Activated T-helper 2 cell treated with anti-CD3 and anti-CD28 coated beads, Interferon-gamma antibody, Interleukin-2, Interleukin-4, amounts not matched to agents 10 μg/mL and 5 μg/mL and 100 μg/mL, durations not matched to agents 14 hours and 24 hours and 36 hours (primary cell): ENCODE measurements at regions of chr14 and their contacts with region 1.

Region 1: GRCh38 chr14:103546652-103547454 is 15.6 kb downstream of the BAG5 start:
- DNase-seq: peak; percentile 59
- H3K4me3 Mint-ChIP-seq: no peak overlapping the region
- H3K27ac Mint-ChIP-seq: no peak overlapping the region
- H3K4me1 Mint-ChIP-seq: no peaks in the 10 kb centered on the region
- H3K27me3 Mint-ChIP-seq: no peaks in the 10 kb centered on the region

Region 2: GRCh38 chr14:103436533-103436932 is 110.3 kb before region 1 on chr14:
- intact Hi-C with region 1: no loop called
- DNase-seq: no peak
- H3K4me3 Mint-ChIP-seq: no peak overlapping the region
- H3K27ac Mint-ChIP-seq: no peak overlapping the region
- H3K4me1 Mint-ChIP-seq: peaks cover 3% of the 10 kb centered on the region
- H3K27me3 Mint-ChIP-seq: no peaks in the 10 kb centered on the region

Region 3: DNA sequence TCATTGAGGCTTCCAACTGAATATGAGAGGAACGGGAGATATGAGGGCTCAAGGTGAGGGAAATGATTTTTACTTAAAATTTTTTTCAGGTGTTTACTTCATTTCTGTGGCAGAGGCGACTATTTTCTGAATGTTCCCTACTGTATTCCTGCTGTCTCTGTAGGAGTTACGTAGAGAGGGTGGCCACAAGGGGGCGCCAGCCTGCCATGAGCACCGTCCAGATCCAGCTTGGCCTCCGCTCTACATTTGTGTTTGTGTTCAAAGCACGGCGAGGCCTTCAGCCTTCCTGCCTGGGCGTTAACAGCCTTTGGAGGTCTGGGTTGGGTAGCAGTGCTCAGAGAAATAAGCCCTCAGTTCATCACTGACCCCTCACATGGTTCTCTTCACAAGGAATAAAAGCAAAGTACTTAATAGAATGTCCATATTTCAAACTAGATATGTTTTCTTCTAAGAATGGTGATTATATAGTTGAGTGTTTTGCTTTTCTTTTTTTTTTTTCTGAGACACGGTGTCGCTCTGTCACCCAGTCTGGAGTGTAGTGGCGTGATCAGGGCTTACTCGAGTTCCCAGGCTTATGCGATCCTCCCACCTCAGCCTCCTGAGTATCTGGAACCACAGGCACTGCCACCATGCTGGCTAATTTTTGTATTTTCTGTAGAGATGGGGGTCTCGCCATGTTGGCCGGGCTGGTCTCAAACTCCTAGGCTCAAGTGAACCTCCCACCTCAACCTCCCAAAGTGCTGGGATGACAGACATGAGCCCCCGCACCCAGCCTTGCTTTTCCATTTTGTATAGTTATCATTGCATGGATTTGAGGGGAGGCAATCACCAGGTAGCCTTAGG is 46.5 kb before region 1 on chr14:
- intact Hi-C with region 1: loop called (anchors 1 kb)
- DNase-seq: peak; percentile 57
- H3K4me3 Mint-ChIP-seq: no peak overlapping the region
- H3K27ac Mint-ChIP-seq: no peak overlapping the region
- H3K4me1 Mint-ChIP-seq: no peaks in the 10 kb centered on the region
- H3K27me3 Mint-ChIP-seq: no peaks in the 10 kb centered on the region

Region 4: GRCh38 chr14:103518422-103519042 is 28.3 kb before region 1 on chr14:
- intact Hi-C with region 1: loop called (anchors 1 kb)
- DNase-seq: no peak
- H3K4me3 Mint-ChIP-seq: no peak overlapping the region
- H3K27ac Mint-ChIP-seq: no peak overlapping the region
- H3K4me1 Mint-ChIP-seq: peaks cover 4% of the 10 kb centered on the region
- H3K27me3 Mint-ChIP-seq: peaks cover 5% of the 10 kb centered on the region